ENCODE measurements at regions of chr17 and their contacts with region 1.

Region 1: GRCh38 chr17:4565209-4566141 is 5.1 kb upstream of the GGT6 start:
- DNase-seq: peak in 12 of 14 experiments; percentile 14 to 81 (median 30)
- ATAC-seq: peak; percentile 89
- H3K4me3 ChIP-seq: no peak overlapping the region
- H3K4me3 Mint-ChIP-seq: peak overlapping the region; percentile 13
- H3K27ac ChIP-seq: no peak overlapping the region
- H3K27ac Mint-ChIP-seq: no peak overlapping the region
- H3K4me1 ChIP-seq: peaks cover 19% of the 10 kb centered on the region
- H3K4me1 Mint-ChIP-seq: peaks cover 31% of the 10 kb centered on the region
- H3K27me3 ChIP-seq: no peaks in the 10 kb centered on the region
- H3K27me3 Mint-ChIP-seq: no peaks in the 10 kb centered on the region
- CTCF ChIP-seq: peak; percentile 92

Region 2: GRCh38 chr17:4891411-4892342 is 326.2 kb after region 1 on chr17:
- CTCF ChIA-PET with region 1: no interaction called
- POLR2A ChIA-PET with region 1: no interaction called
- intact Hi-C with region 1: loop called (anchors 1 to 5 kb)
- DNase-seq: peak in 1 of 14 experiments; percentile 31
- ATAC-seq: no peak
- H3K4me3 ChIP-seq: no peak overlapping the region
- H3K4me3 Mint-ChIP-seq: no peak overlapping the region
- H3K27ac ChIP-seq: no peak overlapping the region
- H3K27ac Mint-ChIP-seq: no peak overlapping the region
- H3K4me1 ChIP-seq: peaks cover 2% of the 10 kb centered on the region
- H3K4me1 Mint-ChIP-seq: peaks cover 5% of the 10 kb centered on the region
- H3K27me3 ChIP-seq: no peaks in the 10 kb centered on the region
- H3K27me3 Mint-ChIP-seq: no peaks in the 10 kb centered on the region
- CTCF ChIP-seq: no peak

Region 3: GRCh38 chr17:4903051-4903818 is 337.8 kb after region 1 on chr17 and contains the start of gene CHRNE:
- CTCF ChIA-PET with region 1: interaction called, 3 read pairs
- POLR2A ChIA-PET with region 1: no interaction called
- intact Hi-C with region 1: loop called in 1 of 2 experiments (anchors 5 kb)
- DNase-seq: peak; percentile 55 to 91 (median 70)
- ATAC-seq: peak; percentile 33
- H3K4me3 ChIP-seq: no peak within 1 kb of the TSS
- H3K4me3 Mint-ChIP-seq: peak within 1 kb of the TSS; percentile 76
- H3K27ac ChIP-seq: no peak within 1 kb of the TSS
- H3K27ac Mint-ChIP-seq: peak within 1 kb of the TSS; percentile 94
- H3K4me1 ChIP-seq: peaks cover 54% of the 10 kb centered on the region
- H3K4me1 Mint-ChIP-seq: peaks cover 35% of the 10 kb centered on the region
- H3K27me3 ChIP-seq: no peaks in the 10 kb centered on the region
- H3K27me3 Mint-ChIP-seq: peaks cover 10% of the 10 kb centered on the region
- CTCF ChIP-seq: peak; percentile 89
- total RNA-seq, gene CHRNE: 3.2 to 3.7 TPM

Measured in CD4-positive, alpha-beta T cell (primary cell).